ENCODE measurements at regions of chr1 and their contacts with region 1.

Region 1: DNA sequence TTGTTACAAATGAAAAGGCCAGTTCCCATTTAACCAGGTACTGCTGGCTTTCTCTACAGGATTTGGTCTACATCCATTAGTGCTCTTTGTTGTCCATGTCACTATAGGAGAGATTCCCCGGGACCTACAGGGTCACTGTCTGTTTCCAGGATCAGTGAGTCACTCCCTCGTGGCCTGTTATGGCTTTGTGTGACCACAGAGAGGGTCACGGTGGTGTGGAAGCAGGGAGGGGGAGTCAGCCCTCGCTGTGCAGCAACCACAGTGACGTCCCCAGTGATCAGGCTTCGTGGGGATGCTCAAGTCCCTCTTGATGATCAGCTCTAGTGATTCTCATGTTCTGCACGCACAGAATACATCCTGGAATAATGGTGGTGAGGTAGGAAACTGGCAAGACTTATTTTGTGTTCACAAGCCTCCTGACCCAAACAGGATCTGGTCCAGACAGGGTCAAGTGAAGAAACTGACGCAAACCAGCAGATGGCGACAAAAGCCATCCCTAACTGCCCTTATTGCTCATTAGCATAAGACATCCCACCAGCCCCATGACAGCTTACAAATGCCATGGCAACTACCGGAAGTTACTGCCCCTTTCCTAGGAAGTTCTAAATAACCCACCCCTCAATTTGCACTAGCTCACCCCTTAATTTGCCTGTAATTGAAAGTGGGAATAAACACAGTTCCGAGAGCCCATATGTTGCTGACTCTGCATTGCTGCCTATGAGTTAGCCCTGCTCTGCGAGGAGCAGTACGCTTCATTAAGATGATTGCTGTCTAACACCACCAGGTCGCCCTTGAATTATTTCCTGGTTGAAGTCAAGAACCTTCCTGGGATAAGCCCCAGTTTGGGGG is 98.5 kb downstream of the DISC1 start:
- H3K4me3 ChIP-seq: no peak overlapping the region
- H3K27ac ChIP-seq: no peak overlapping the region
- H3K4me1 ChIP-seq: no peaks in the 10 kb centered on the region
- CTCF ChIP-seq: peak; percentile 31; the same call in 1 of the 2 replicates

Region 2: GRCh38 chr1:231460614-231461013 is 264.5 kb before region 1 on chr1:
- CTCF ChIA-PET with region 1: no interaction called
- POLR2A ChIA-PET with region 1: no interaction called
- H3K4me3 ChIP-seq: no peak overlapping the region
- H3K27ac ChIP-seq: no peak overlapping the region
- H3K4me1 ChIP-seq: no peaks in the 10 kb centered on the region
- CTCF ChIP-seq: no peak

Region 3: GRCh38 chr1:231571904-231572303 is 153.2 kb before region 1 on chr1:
- CTCF ChIA-PET with region 1: no interaction called
- POLR2A ChIA-PET with region 1: no interaction called
- H3K4me3 ChIP-seq: no peak overlapping the region
- H3K27ac ChIP-seq: no peak overlapping the region
- H3K4me1 ChIP-seq: no peaks in the 10 kb centered on the region
- CTCF ChIP-seq: no peak

Region 4: GRCh38 chr1:231705806-231706760 is 19.0 kb before region 1 on chr1:
- CTCF ChIA-PET with region 1: interaction called, 15 read pairs
- POLR2A ChIA-PET with region 1: interaction called, 8 read pairs
- H3K4me3 ChIP-seq: no peak overlapping the region
- H3K27ac ChIP-seq: no peak overlapping the region
- H3K4me1 ChIP-seq: peaks cover 10% of the 10 kb centered on the region; the same call in 1 of the 2 replicates
- CTCF ChIP-seq: no peak

Region 5: GRCh38 chr1:231763456-231763855 is 38.4 kb after region 1 on chr1:
- CTCF ChIA-PET with region 1: no interaction called
- POLR2A ChIA-PET with region 1: no interaction called
- H3K4me3 ChIP-seq: no peak overlapping the region
- H3K27ac ChIP-seq: no peak overlapping the region
- H3K4me1 ChIP-seq: no peaks in the 10 kb centered on the region
- CTCF ChIP-seq: no peak

Measured in HEK293 (cell line).